HepG2 (cell line): ENCODE measurements at regions of chr17 and their contacts with region 1.

Region 1: GRCh38 chr17:38498186-38498752 is 70.0 kb downstream of the ARHGAP23 start:
- DNase-seq: no peak
- ATAC-seq: no peak
- H3K4me3 ChIP-seq: no peak overlapping the region
- H3K27ac ChIP-seq: no peak overlapping the region
- H3K4me1 ChIP-seq: no peaks in the 10 kb centered on the region
- H3K27me3 ChIP-seq: peaks cover 0 to 22% of the 10 kb centered on the region in 2 experiments; a peak in 3 of 5 replicates
- CTCF ChIP-seq: peak; percentile 37
- EP300 ChIP-seq: no peak
- POLR2A ChIP-seq: no peak
- RAD21 ChIP-seq: no peak

Region 2: GRCh38 chr17:38509008-38509771 is 10.9 kb after region 1 on chr17:
- CTCF ChIA-PET with region 1: interaction called, 18 read pairs
- POLR2A ChIA-PET with region 1: no interaction called
- in situ Hi-C with region 1: no loop called
- intact Hi-C with region 1: no loop called
- DNase-seq: peak; percentile 84
- ATAC-seq: peak; percentile 83
- H3K4me3 ChIP-seq: peak overlapping the region; percentile 0 to 66 (median 4); a peak in 2 of 6 replicates
- H3K27ac ChIP-seq: no peak overlapping the region
- H3K4me1 ChIP-seq: peaks cover 25% of the 10 kb centered on the region
- H3K27me3 ChIP-seq: peaks cover 8 to 73% of the 10 kb centered on the region in 2 experiments; a peak in 4 of 5 replicates
- CTCF ChIP-seq: peak; percentile 84
- EP300 ChIP-seq: no peak
- POLR2A ChIP-seq: no peak
- RAD21 ChIP-seq: peak; percentile 72

Region 3: DNA sequence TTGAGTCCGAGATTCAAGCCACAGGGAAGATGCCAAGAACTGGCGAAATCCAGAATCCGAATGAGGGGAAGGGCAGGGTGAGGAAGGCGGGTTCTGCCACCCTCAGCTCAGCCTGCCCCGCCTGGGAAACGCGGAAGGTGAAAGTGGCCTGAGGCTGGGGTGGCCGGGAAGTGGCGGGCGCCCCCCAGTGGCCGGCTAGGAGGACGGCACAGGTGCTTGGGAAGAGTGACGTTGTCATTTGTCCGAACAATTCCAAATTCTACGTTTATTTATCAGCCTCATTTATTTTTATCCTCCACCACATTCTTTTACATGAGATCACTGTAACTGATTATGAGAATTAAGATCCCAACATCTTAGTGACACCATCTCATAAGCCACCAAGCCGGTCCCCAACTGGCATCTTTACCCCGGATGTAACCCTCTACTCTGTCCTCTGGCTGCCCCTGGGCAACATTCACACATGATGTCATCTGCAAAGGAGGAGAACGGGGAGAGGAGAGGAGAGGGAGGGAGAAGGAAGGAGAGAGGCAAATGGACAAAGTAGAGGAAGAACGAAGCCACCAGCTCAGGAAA is 86.2 kb after region 1 on chr17:
- CTCF ChIA-PET with region 1: no interaction called
- POLR2A ChIA-PET with region 1: no interaction called
- in situ Hi-C with region 1: no loop called
- intact Hi-C with region 1: loop called (anchors 2 kb)
- DNase-seq: peak; percentile 41
- ATAC-seq: peak; percentile 73
- H3K4me3 ChIP-seq: peak overlapping the region in 1 of 3 experiments; percentile 47; a peak in 1 of 6 replicates
- H3K27ac ChIP-seq: no peak overlapping the region
- H3K4me1 ChIP-seq: peaks cover 49% of the 10 kb centered on the region
- H3K27me3 ChIP-seq: peaks cover 0 to 25% of the 10 kb centered on the region in 2 experiments; a peak in 3 of 5 replicates
- CTCF ChIP-seq: peak; percentile 94
- EP300 ChIP-seq: no peak
- POLR2A ChIP-seq: no peak
- RAD21 ChIP-seq: peak; percentile 91